Testis (tissue), 5 donors: ENCODE measurements at regions of chr16 and their contacts with region 1.

Region 1: DNA sequence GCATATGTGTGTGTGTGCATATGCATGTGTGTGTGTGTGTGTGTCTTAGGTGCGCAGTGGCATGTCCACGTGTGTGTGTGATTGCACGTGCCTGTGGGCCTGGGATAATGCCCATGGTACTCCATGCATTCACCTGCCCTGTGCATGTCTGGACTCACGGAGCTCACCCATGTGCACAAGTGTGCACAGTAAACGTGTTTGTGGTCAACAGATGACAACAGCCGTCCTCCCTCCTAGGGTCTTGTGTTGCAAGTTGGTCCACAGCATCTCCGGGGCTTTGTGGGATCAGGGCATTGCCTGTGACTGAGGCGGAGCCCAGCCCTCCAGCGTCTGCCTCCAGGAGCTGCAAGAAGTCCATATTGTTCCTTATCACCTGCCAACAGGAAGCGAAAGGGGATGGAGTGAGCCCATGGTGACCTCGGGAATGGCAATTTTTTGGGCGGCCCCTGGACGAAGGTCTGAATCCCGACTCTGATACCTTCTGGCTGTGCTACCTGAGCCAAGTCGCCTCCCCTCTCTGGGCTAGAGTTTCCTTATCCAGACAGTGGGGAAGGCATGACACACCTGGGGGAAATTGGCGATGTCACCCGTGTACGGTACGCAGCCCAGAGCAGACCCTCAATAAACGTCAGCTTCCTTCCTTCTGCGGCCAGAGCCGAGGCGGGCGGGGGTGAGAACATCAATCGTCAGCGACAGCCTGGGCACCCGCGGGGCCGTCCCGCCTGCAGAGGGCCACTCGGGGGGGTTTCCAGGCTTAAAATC is 47.6 kb downstream of the IL21R start:
- DNase-seq: no peak
- H3K4me3 ChIP-seq: no peak overlapping the region
- H3K27ac ChIP-seq: no peak overlapping the region
- H3K4me1 ChIP-seq: no peaks in the 10 kb centered on the region
- H3K27me3 ChIP-seq: no peaks in the 10 kb centered on the region
- CTCF ChIP-seq: no peak
- POLR2A ChIP-seq: no peak

Region 2: GRCh38 chr16:27179500-27180072 is 270.0 kb before region 1 on chr16:
- intact Hi-C with region 1: loop called (anchors 10 kb)
- DNase-seq: peak; percentile 89
- H3K4me3 ChIP-seq: no peak overlapping the region
- H3K27ac ChIP-seq: no peak overlapping the region
- H3K4me1 ChIP-seq: peaks cover 3% of the 10 kb centered on the region
- H3K27me3 ChIP-seq: no peaks in the 10 kb centered on the region
- CTCF ChIP-seq: peak; percentile 69 to 83 (median 83)
- POLR2A ChIP-seq: no peak